HAP-1 (cell line): ENCODE measurements at regions of chrX and their contacts with region 1.

Region 1: DNA sequence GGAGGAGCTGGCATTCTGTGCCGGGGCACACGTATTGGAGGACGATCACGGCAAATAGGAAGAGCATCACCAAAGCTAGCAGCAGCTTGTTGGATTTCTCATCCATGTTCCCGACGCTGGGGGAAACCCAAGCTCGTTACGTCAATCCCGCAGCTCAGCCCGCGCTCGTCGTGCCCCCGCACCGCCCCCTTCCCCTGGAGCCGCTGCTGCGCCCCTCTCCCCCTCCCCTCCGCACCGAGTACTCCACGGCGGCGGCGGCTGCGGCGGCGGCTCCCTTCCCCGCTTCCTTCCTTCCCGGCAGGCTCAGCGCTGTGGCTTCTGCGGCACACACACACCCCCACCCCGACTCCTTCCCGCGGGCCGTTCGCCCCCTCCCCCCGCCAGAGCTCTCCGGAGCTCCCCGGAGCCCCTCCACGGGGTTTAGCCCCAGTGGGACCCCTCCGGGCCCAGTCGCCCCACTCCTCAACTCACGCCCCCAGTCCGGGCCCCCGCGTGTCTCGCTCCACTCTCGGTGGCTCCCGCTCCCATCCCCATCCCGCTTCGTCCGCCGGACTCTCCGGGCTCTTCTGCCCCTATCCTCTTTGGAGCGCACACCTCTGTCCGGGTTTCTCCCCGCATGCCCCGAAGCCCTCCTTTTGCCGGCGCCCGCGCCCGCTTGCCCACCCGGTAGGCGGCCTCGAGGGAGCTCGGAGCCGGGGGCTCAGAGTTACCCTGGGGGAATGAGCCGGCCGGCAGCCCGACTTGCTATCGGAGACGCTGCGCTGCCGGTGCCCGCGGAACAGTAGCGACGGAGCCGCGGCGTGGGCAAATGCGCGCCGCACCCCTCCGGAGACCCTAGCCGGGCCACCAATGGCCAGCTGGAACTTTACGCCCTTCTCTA is 978 bp downstream of the HS6ST2 start:
- DNase-seq: peak; percentile 39 to 85
- H3K4me3 ChIP-seq: peak overlapping the region; percentile 59
- H3K4me1 ChIP-seq: peaks cover 34% of the 10 kb centered on the region
- H3K27me3 ChIP-seq: no peaks in the 10 kb centered on the region

Region 2: DNA sequence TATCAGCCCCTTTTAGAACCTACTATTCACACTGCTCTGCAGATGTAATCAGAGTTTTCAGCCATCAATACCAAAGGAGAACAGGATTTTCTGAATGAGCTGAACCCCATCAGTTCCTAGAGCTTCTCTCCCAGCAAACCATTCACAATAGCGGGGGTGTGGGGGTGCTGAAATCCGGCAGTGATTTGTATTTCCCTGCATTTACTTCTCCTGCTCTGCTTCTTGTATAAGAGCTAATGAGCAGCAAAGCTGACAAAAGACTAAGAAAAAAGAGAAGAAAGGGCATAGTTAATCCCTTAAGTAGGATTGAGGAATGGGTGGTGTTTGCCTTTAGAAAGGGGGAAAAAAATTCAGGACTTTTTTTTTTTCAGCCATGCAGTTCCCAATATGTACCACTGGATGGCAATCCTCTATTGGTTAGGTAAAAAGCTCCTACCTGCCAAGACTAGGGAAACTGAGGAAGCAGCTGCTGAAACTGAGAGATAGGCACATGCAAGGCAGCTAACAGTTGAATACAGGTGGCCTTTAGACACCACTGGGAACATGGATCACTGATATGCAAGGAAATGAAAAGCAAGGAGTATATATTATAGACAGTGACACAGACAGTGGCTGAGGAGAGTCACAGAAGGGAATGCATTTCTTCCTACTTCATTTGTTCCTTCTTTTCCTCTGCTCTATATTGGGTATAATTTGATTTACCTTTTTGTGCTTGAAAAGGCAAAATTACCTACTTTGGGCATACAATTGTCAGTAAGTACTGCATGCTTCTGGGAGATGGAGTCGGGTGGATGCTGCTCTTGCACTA is 216.9 kb before region 1 on chrX:
- in situ Hi-C with region 1: loop called (anchors 10 kb)
- DNase-seq: peak; percentile 82 to 98
- H3K4me3 ChIP-seq: no peak overlapping the region
- H3K4me1 ChIP-seq: peaks cover 37% of the 10 kb centered on the region
- H3K27me3 ChIP-seq: no peaks in the 10 kb centered on the region

Region 3: DNA sequence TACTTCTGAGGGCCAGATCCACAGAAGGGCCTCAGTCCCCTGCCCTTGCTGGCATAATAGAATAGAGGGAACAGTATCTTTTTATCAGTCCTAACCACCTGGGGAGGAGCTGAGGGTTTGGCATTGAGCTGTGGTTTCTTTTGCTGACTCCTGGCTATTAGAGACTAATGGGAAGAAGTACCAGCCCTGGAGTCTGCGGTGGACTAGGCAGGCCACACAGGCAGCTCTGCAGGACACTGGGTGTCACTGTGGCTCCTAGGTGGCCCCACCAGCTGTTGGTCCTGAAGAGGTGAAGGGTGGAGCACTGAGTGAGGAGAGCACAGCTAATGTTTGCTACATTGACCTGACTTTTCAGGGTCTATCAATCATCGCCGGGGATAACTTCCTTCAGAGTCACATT is 510.6 kb after region 1 on chrX:
- in situ Hi-C with region 1: no loop called
- DNase-seq: no peak
- H3K4me3 ChIP-seq: no peak overlapping the region
- H3K4me1 ChIP-seq: no peaks in the 10 kb centered on the region
- H3K27me3 ChIP-seq: no peaks in the 10 kb centered on the region